ENCODE measurements at regions of chr3 and their contacts with region 1.

Region 1: GRCh38 chr3:69699183-69699582 is 40.1 kb upstream of the MITF start:
- DNase-seq: no peak
- ATAC-seq: no peak
- H3K4me3 ChIP-seq: no peak overlapping the region
- H3K27ac ChIP-seq: no peak overlapping the region
- H3K4me1 ChIP-seq: no peaks in the 10 kb centered on the region
- H3K27me3 ChIP-seq: no peaks in the 10 kb centered on the region
- CTCF ChIP-seq: no peak

Region 2: GRCh38 chr3:69458803-69459365 is 240.3 kb before region 1 on chr3:
- intact Hi-C with region 1: no loop called
- DNase-seq: no peak
- ATAC-seq: no peak
- H3K4me3 ChIP-seq: no peak overlapping the region
- H3K27ac ChIP-seq: no peak overlapping the region
- H3K4me1 ChIP-seq: peaks cover 0 to 5% (median 0%) of the 10 kb centered on the region in 9 donors
- H3K27me3 ChIP-seq: no peaks in the 10 kb centered on the region
- CTCF ChIP-seq: no peak

Region 3: GRCh38 chr3:69710153-69710977 is 11.2 kb after region 1 on chr3:
- intact Hi-C with region 1: loop called in 1 of 10 experiments (anchors 1 kb)
- DNase-seq: no peak
- ATAC-seq: peak in 1 of 8 donors; percentile 60
- H3K4me3 ChIP-seq: no peak overlapping the region
- H3K27ac ChIP-seq: no peak overlapping the region
- H3K4me1 ChIP-seq: peaks cover 0 to 11% (median 3%) of the 10 kb centered on the region in 9 donors
- H3K27me3 ChIP-seq: no peaks in the 10 kb centered on the region
- CTCF ChIP-seq: no peak

Measured in heart right ventricle (tissue), 16 donors.